ENCODE measurements at regions of chr14 and their contacts with region 1.

Region 1: DNA sequence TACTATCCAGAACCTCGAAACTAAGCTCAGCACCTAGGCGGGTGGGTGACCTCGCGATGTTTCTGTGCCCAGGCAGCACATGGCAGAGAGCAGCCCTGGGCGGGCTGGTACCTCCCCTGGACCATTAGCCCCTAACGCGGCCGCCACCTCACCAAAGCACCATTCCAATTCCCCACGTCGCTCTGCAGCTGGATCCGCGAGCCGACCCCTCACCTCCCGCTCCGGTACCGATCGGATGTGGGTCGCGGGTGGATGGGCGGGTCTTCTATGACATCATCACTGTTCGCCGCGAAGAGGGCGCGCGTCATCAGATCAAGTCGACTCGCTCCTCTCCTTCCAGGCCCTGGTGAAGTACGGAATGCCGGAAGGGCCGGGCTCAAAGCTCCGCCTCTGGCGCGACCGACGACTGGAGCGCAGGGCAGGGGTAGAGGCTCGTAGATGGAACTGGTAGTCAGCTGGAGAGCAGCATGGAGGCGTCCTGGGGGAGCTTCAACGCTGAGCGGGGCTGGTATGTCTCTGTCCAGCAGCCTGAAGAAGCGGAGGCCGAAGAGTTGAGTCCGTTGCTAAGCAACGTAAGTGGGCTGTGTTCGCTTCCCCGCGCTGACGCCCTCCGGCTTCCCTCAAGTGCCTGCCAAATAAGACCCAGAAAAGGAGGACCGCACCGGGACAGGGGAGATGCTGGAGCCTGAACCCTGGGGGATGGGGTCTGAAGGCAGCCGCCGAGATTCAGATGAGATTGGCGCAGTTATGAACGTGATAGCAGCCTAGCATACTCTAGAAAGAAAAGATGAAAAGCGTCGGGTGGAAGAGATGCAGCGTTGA is at the starts of genes SLC38A6 and TRMT5:
- DNase-seq: peak; percentile 88
- H3K4me3 ChIP-seq: peak within 1 kb of the TSS; percentile 81
- H3K27ac ChIP-seq: peak within 1 kb of the TSS; percentile 38
- H3K4me1 ChIP-seq: peaks cover 41% of the 10 kb centered on the region
- CTCF ChIP-seq: no peak
- total RNA-seq, gene SLC38A6: 12.9 and 16.8 TPM in 2 replicates
- total RNA-seq, gene TRMT5: 7.0 and 17.6 TPM in 2 replicates

Region 2: GRCh38 chr14:60815371-60815770 is 165.7 kb before region 1 on chr14:
- CTCF ChIA-PET with region 1: no interaction called
- POLR2A ChIA-PET with region 1: interaction called, 3 read pairs
- intact Hi-C with region 1: loop called (anchors 2 kb)
- DNase-seq: peak; percentile 84
- H3K4me3 ChIP-seq: peak overlapping the region; percentile 25
- H3K27ac ChIP-seq: peak overlapping the region; percentile 77
- H3K4me1 ChIP-seq: peaks cover 34% of the 10 kb centered on the region
- CTCF ChIP-seq: no peak

Region 3: GRCh38 chr14:61147831-61148549 is 167.0 kb after region 1 on chr14:
- CTCF ChIA-PET with region 1: no interaction called
- POLR2A ChIA-PET with region 1: no interaction called
- intact Hi-C with region 1: no loop called
- DNase-seq: no peak
- H3K4me3 ChIP-seq: no peak overlapping the region
- H3K27ac ChIP-seq: no peak overlapping the region
- H3K4me1 ChIP-seq: no peaks in the 10 kb centered on the region
- CTCF ChIP-seq: no peak